Sciatic nerve (tissue), 2 donors: ENCODE measurements at regions of chr6 and their contacts with region 1.

Region 1: DNA sequence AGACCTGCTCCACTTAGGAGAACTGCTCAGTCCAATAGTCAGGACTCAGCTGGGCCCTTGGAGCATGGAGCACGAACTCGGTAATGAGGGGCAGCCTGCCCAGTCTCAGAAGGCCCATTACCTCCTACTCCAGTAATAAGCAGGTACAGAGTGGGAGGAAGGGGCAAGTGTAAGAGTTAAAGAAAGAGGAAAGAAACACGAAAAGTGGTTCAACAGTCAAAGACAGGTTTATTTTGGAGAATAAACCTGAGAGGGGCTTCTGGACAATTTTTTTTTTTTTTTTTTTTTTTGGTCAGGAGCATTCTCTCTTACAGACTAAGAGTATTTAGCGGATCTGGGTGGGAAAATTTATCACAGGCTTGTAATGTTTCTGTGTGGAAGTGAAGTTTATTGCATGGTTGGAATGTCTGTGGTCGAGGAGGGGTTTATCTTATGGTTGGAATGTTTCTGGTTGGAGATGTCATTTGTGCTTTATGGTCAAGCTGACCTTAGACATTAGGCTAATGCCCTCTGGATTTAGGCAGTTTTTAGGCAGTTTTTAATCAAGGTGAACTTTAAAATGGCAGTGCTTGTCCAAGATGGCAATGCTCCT is 340.1 kb downstream of the BCKDHB start:
- DNase-seq: no peak
- ATAC-seq: no peak

Region 2: DNA sequence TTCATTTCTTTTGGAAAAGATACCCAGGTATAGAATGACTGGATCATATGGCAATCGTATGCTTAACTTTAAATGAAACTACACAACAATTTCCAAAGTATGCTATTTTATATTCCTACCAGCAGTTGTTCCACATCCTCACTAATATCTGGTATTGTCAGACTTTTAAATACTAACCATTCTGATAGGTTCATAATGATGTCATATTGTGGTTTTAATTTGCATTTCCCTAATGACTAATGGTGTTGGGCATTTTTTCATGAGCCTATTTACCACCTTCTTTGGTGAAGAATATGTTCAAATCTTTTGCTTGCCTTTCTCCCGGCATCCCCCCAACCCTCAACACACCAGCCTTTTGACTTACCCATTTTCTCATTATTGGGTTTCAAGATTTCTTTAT is 1115.8 kb before region 1 on chr6:
- intact Hi-C with region 1: no loop called
- DNase-seq: no peak
- ATAC-seq: no peak

Region 3: GRCh38 chr6:80197474-80197873 is 249.1 kb before region 1 on chr6:
- intact Hi-C with region 1: no loop called
- DNase-seq: no peak
- ATAC-seq: no peak

Region 4: DNA sequence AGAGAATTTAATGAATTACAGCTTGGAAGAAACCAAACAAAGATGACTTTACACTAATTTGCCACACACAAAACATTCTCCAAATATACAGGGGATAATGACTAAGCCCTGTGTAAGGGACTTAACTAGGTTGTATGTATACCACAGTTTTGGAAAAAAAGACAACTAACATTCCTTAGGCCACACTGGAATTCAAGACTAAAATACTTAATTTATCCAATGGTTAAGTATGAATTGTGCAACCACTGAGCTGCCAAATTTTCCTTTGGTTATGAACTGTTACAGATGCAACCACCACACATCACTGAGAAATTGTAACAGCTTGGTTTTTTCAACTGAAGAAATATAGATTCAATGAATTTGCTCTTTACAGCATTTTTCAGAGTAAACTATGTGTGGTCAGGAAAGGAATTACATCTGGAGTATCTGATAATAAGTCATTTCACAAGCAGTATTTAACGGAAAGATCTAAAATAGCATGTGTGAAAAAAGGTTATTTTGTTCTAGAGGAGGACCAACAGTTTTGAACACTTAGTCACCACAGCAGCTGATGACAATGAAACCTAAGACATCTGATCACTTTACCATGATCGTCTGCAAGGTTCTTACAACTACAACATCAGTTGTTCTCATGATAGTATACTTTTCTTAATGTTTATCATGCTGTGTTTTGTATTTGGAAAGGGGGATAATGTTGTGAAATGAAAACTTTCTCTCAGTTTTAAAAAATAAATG is 21.3 kb before region 1 on chr6:
- intact Hi-C with region 1: loop called (anchors 2 kb)
- DNase-seq: no peak
- ATAC-seq: no peak

Region 5: GRCh38 chr6:80480421-80481157 is 34.0 kb after region 1 on chr6:
- intact Hi-C with region 1: no loop called
- DNase-seq: no peak
- ATAC-seq: no peak